ENCODE measurements at regions of chr10 and their contacts with region 1.

Region 1: DNA sequence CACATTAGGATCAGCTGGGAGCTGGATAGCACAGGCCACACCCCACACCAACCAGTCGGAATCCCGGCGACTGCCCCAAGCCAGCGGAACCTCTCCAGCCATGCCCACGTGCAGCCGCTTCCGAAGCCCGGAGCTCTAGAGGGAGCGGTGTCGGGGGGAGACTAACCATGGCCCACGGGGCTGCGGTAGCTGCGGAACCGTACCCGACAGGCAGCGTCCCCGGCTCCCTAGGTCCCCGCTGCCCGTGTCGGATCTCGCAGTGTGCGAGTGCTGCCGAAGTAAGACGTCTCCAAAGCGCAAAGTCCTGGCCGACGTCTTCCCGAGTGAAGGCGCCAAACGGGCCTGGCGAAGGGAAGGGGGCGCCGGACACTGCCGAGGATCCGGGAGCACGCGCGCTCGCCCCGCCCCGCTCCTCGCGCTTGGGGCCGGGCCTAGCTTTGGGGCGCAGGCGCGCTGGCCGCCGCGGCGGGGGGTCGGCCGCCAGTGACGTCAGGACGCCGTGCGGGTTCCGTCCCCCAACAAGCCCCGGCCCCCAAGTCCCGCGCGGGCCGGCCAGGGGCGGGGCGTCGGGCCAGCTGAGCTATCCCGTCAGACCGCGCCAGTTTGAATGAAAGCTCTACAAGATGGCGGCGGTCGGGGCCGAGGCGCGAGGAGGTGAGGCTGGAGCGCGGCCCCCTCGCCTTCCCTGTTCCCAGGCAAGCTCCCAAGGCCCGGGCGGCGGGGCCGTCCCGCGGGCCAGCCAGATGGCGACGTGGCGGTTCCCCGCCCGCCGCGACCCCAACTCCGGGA is at the start of gene SUV39H2:
- DNase-seq: peak; percentile 97
- H3K4me3 ChIP-seq: peak within 1 kb of the TSS; percentile 75 to 98 (median 96)
- H3K27ac ChIP-seq: peak within 1 kb of the TSS; percentile 90 to 98 (median 94)
- H3K4me1 ChIP-seq: peaks cover 19 to 34% (median 27%) of the 10 kb centered on the region in 4 donors
- H3K27me3 ChIP-seq: no peaks in the 10 kb centered on the region
- CTCF ChIP-seq: peak in 1 of 3 experiments; percentile 13
- EP300 ChIP-seq: no peak
- POLR2A ChIP-seq: peak; percentile 71
- total RNA-seq, gene SUV39H2: 2.4 to 9.6 (median 4.3) TPM

Region 2: GRCh38 chr10:14837757-14838581 is 40.5 kb before region 1 on chr10 and contains the starts of genes CDNF, HSPA14 and MSANTD7:
- intact Hi-C with region 1: loop called (anchors 5 kb)
- DNase-seq: peak; percentile 99
- H3K4me3 ChIP-seq: peak within 1 kb of the TSS; percentile 71 to 97 (median 84)
- H3K27ac ChIP-seq: peak within 1 kb of the TSS; percentile 95 to 96 (median 96)
- H3K4me1 ChIP-seq: peaks cover 17 to 22% (median 19%) of the 10 kb centered on the region in 4 donors
- H3K27me3 ChIP-seq: no peaks in the 10 kb centered on the region
- CTCF ChIP-seq: peak in 1 of 3 experiments; percentile 9
- EP300 ChIP-seq: no peak
- POLR2A ChIP-seq: peak; percentile 66
- total RNA-seq, gene CDNF: 0.45 to 3.7 (median 0.67) TPM
- total RNA-seq, gene HSPA14: 6.8 to 9.8 (median 7.8) TPM
- total RNA-seq, gene MSANTD7: 5.4 to 11.1 (median 8.0) TPM

Region 3: GRCh38 chr10:14954001-14954770 is 75.7 kb after region 1 on chr10 and contains the start of gene DCLRE1C:
- intact Hi-C with region 1: loop called (anchors 5 kb)
- DNase-seq: peak; percentile 97
- H3K4me3 ChIP-seq: peak within 1 kb of the TSS; percentile 72 to 90 (median 75)
- H3K27ac ChIP-seq: peak within 1 kb of the TSS; percentile 86 to 94 (median 90)
- H3K4me1 ChIP-seq: peaks cover 15 to 43% (median 32%) of the 10 kb centered on the region in 4 donors
- H3K27me3 ChIP-seq: no peaks in the 10 kb centered on the region
- CTCF ChIP-seq: no peak
- EP300 ChIP-seq: no peak
- POLR2A ChIP-seq: no peak
- total RNA-seq, gene DCLRE1C: 6.6 to 12.8 (median 10.6) TPM

Region 4: GRCh38 chr10:15097011-15097812 is 218.8 kb after region 1 on chr10 and contains the start of gene RPP38:
- intact Hi-C with region 1: loop called (anchors 10 kb)
- DNase-seq: peak; percentile 99
- H3K4me3 ChIP-seq: peak within 1 kb of the TSS; percentile 75 to 93 (median 84)
- H3K27ac ChIP-seq: peak within 1 kb of the TSS; percentile 89 to 98 (median 94)
- H3K4me1 ChIP-seq: peaks cover 19 to 39% (median 31%) of the 10 kb centered on the region in 4 donors
- H3K27me3 ChIP-seq: peaks cover 0 to under 1% (median 0%) of the 10 kb centered on the region in 4 donors
- CTCF ChIP-seq: peak in 1 of 3 experiments; percentile 4
- EP300 ChIP-seq: no peak
- POLR2A ChIP-seq: no peak
- total RNA-seq, gene RPP38: 9.1 to 16.2 (median 10.9) TPM

Region 5: DNA sequence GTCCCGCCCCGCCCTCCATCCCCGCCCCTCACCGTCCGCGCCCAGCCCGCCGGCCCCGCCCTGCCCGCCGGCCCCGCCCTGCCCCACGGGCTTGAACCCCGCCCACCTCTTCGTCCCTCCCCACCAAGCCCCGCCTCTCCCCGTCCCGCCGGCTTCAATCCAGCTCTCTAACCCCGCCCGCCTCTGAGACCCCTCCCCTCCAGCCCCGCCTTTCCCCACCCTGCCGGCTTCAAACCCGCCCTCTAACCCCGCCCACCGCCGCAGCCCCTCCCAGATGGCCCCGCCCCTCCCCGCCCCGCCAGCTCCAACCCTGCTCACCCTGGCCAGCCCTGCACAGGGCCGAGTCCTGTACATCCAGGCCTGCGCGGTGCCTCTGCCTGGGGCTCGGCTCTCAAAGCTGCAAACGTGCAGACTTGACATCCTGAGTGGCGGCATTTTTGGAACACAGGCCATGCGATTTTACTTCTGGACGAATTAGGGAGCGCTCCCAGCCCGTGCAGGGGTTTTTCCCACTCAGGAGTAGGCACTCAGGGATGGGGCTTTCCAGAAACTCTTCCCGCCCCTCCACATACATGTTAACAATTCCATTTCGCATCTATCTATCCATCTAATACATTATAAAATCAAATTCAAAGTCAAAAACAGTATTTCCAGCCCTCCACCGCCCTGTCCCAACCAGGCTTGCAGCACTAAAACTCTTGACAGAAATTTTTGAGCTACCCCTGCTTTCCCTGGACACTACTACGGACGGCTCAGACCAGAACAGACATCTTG is 290.5 kb after region 1 on chr10:
- intact Hi-C with region 1: loop called (anchors 10 kb)
- DNase-seq: peak; percentile 98
- H3K4me3 ChIP-seq: peak overlapping the region; percentile 45 to 99 (median 94)
- H3K27ac ChIP-seq: peak overlapping the region; percentile 21 to 67 (median 53)
- H3K4me1 ChIP-seq: peaks cover 14 to 35% (median 32%) of the 10 kb centered on the region in 4 donors
- H3K27me3 ChIP-seq: no peaks in the 10 kb centered on the region
- CTCF ChIP-seq: no peak
- EP300 ChIP-seq: no peak
- POLR2A ChIP-seq: no peak

Measured in esophagus muscularis mucosa (tissue), 4 donors.